ENCODE measurements at regions of chr9 and their contacts with region 1.

Region 1: GRCh38 chr9:35962126-35962906 is 4.4 kb upstream of the OR2S2 start:
- DNase-seq: peak; percentile 29 to 70 (median 55)
- ATAC-seq: peak; percentile 24 to 90 (median 42)
- H3K4me3 ChIP-seq: peak overlapping the region in 4 of 12 donors; percentile 6 to 29 (median 13)
- H3K27ac ChIP-seq: peak overlapping the region in 1 of 12 donors; percentile 17
- H3K4me1 ChIP-seq: peaks cover 0 to 7% (median 0%) of the 10 kb centered on the region in 12 donors
- H3K27me3 ChIP-seq: no peaks in the 10 kb centered on the region
- CTCF ChIP-seq: no peak
- POLR2A ChIP-seq: no peak

Region 2: DNA sequence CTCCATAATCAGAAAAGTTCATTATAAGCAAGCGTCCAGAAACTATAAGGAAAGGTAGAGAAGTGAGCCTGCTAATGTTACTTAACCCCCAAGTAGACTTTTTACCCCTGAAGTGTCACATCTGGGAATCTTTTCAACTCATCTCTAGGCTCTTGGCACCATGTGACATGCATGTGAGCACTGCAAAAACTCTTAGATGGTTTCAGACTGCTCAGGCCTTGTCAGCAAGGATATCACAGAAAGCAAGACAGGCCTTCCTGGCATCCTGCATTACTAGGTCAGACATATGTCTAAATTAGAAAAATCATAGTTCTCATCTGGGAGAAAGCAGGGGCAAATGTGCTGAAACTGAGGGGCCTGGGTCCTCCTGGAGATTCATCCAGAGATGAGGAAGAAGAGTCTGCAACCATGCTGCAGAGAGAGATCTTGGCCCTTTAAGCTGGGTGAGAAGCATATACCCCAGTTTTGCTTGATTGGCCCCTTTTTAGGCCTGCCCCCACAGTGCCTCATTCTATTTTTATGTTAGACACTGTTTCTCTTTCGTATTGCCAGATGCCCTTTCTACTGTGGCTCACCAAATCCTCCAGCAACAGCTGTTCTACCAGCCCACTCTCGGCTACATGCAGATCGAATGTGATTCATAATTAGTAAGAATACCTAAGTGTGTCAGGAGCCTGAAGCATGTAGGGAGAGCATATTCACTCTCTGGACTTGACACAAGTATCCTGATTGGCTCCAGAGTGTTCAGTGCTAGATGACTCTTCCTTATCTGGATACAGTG is 114.3 kb before region 1 on chr9:
- intact Hi-C with region 1: no loop called
- DNase-seq: no peak
- ATAC-seq: peak; percentile 65 to 88 (median 80)
- H3K4me3 ChIP-seq: no peak overlapping the region
- H3K27ac ChIP-seq: peak overlapping the region; percentile 3 to 72 (median 48)
- H3K4me1 ChIP-seq: peaks cover 0 to 60% (median 26%) of the 10 kb centered on the region in 12 donors
- H3K27me3 ChIP-seq: peaks cover 0 to 21% (median 0%) of the 10 kb centered on the region in 9 donors
- CTCF ChIP-seq: no peak
- POLR2A ChIP-seq: no peak

Region 3: DNA sequence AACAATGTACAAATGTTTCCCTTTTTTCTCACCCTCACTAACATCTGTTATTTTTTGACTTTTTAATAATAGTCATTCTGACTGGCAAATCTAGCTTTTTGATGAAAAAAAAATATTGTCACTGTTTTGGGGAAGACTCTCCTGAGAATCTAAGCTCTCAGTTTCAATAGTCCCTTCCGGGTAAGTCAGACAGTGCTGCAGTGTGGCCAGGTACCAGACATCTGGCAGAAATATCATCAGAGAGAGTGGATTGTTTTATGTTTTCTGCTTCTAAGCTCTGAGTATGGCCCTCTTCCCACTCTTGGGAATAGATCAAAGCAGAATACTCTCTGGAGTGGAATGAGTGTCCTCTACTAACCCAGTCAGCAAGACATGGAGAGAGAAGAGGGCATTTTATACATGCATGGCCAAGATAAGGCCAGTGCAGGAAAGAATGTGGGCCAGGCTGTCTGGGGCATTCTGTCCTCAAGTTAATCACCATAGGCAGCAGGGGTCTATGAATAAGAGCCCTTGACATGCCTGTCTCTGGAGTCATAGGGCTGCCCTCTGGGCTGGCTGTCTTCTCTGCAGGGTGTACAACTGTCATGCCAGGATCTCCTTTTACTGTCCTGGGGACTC is 34.2 kb after region 1 on chr9:
- intact Hi-C with region 1: loop called in 1 of 10 experiments (anchors 5 kb)
- DNase-seq: peak in 4 of 5 donors; percentile 27 to 53 (median 40)
- ATAC-seq: peak; percentile 94 to 97 (median 95)
- H3K4me3 ChIP-seq: no peak overlapping the region
- H3K27ac ChIP-seq: peak overlapping the region in 5 of 12 donors; percentile 15 to 70 (median 36)
- H3K4me1 ChIP-seq: peaks cover 0 to 13% (median 0%) of the 10 kb centered on the region in 12 donors
- H3K27me3 ChIP-seq: no peaks in the 10 kb centered on the region
- CTCF ChIP-seq: no peak
- POLR2A ChIP-seq: no peak

Region 4: GRCh38 chr9:36306471-36307306 is 344.4 kb after region 1 on chr9:
- intact Hi-C with region 1: no loop called
- DNase-seq: no peak
- ATAC-seq: no peak
- H3K4me3 ChIP-seq: no peak overlapping the region
- H3K27ac ChIP-seq: no peak overlapping the region
- H3K4me1 ChIP-seq: no peaks in the 10 kb centered on the region
- H3K27me3 ChIP-seq: no peaks in the 10 kb centered on the region
- CTCF ChIP-seq: no peak
- POLR2A ChIP-seq: no peak

Measured in heart left ventricle (tissue), 16 donors.